Transverse colon (tissue), 4 donors: ENCODE measurements at regions of chr12 and their contacts with region 1.

Region 1: DNA sequence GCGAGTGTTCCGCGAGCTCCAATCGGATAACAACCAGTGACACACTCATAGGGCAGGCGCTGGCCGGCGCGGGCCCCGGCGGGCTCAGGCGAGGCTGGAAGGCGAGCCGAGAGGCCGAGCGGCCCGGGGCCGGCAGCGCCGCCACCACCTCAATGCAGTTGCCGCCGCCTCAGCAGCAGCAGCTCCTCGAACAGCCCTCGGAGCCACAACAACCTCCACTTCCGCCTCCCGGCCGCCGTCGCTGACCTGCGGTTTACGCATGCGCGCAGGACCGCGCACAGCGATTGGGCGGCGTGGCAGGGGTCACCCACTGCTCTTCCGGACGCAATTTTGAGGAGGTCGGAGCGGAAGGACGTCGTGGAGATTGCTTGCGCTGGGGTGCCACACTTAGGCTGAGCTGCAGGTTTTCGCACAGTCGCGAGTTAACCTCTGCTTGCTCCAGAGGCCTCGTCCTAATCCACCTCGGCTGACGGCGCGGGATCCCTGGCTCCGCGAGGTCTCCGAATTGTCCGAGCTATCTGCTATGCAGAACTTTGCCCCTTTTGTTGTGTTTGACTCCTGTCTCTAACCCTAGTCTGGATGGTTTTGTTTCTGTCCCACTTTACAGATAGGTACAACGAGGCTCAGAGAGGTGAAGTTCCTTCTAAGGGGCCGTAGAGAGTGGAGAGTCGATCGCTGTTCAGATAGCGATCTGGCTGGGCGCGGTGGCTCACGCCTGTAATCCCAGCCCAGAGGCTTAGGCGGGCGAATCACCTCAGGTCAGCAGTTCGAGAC is at the starts of genes ACAD10 and BRAP:
- DNase-seq: peak; percentile 97
- H3K4me3 ChIP-seq: peak within 1 kb of the TSS; percentile 59 to 99 (median 95)
- H3K27ac ChIP-seq: peak within 1 kb of the TSS; percentile 91 to 93 (median 92)
- H3K4me1 ChIP-seq: peaks cover 19 to 26% (median 20%) of the 10 kb centered on the region in 4 donors
- H3K27me3 ChIP-seq: no peaks in the 10 kb centered on the region
- CTCF ChIP-seq: no peak
- EP300 ChIP-seq: no peak
- POLR2A ChIP-seq: peak; percentile 90
- total RNA-seq, gene ACAD10: 49.0 to 198 (median 54.7) TPM
- total RNA-seq, gene BRAP: 10.8 to 17.3 (median 15.9) TPM

Region 2: DNA sequence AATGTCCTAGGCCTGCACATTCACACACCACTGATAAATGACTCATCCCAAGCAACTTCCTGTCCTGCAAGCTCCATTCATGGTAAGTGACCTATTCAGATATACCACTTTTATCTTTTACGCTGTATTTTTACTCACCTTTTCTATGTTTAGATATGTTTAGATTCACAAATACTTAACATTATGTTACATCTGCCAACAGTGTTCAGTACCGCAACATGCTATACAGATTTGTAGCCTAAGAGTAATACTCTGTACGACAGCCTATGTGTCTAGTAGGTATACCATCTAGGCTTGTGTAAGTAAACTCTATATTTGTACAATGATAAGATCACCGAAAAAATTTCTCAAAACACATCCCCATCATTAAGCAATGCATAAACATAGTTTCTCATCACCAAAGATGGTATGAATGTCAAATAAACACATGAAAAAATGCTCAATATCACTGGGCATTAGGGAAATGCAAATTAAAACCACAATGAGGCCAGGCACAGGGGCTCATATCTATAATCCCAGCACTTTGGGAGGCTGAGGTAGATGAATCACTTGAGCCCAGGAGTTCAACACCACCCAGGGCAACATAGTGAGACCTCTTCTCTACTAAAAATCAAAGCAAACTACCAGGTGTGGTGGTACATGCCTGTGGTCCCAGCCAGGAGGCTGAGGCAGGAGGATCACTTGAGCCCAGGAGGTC is 107.5 kb before region 1 on chr12:
- in situ Hi-C with region 1: no loop called
- intact Hi-C with region 1: no loop called
- DNase-seq: no peak
- H3K4me3 ChIP-seq: no peak overlapping the region
- H3K27ac ChIP-seq: no peak overlapping the region
- H3K4me1 ChIP-seq: peaks cover under 1 to 10% (median 8%) of the 10 kb centered on the region in 4 donors
- H3K27me3 ChIP-seq: no peaks in the 10 kb centered on the region
- CTCF ChIP-seq: no peak
- EP300 ChIP-seq: no peak
- POLR2A ChIP-seq: no peak

Region 3: GRCh38 chr12:111643427-111643826 is 42.5 kb before region 1 on chr12:
- in situ Hi-C with region 1: no loop called
- intact Hi-C with region 1: loop called (anchors 1 kb)
- DNase-seq: peak; percentile 53
- H3K4me3 ChIP-seq: no peak overlapping the region
- H3K27ac ChIP-seq: peak overlapping the region; percentile 12 to 70 (median 54)
- H3K4me1 ChIP-seq: peaks cover 6 to 20% (median 8%) of the 10 kb centered on the region in 4 donors
- H3K27me3 ChIP-seq: no peaks in the 10 kb centered on the region
- CTCF ChIP-seq: no peak
- EP300 ChIP-seq: no peak
- POLR2A ChIP-seq: no peak

Region 4: DNA sequence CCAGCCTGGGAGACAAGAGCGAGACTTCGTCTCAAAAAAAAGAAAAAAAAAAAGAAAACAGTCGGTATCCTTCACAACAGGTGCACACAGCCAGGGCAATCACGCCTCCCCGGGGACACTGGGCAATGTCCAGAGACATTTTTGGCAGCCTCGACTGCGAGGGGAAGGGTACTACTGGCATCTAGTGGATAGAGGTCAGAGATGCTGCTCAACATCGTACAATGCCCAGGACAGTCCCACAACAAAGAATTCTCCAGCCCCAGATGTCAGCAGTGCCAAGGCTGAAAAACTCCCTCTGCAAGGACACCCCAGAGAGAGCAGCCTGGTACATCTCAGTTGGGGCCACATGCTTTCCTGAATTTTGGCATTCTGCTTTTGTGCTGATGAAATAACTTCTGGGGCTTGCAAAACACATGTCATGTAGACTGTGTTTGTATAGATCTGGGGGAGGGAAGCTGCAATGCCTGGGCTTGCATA is 102.3 kb after region 1 on chr12:
- in situ Hi-C with region 1: no loop called
- intact Hi-C with region 1: no loop called
- DNase-seq: no peak
- H3K4me3 ChIP-seq: no peak overlapping the region
- H3K27ac ChIP-seq: peak overlapping the region in 2 of 4 donors; percentile 7 to 18
- H3K4me1 ChIP-seq: peaks cover 0 to 19% (median 14%) of the 10 kb centered on the region in 4 donors
- H3K27me3 ChIP-seq: no peaks in the 10 kb centered on the region
- CTCF ChIP-seq: peak; percentile 28 to 41 (median 31)
- EP300 ChIP-seq: no peak
- POLR2A ChIP-seq: no peak